ENCODE measurements at regions of chr7 and their contacts with region 1.

Region 1: GRCh38 chr7:139043823-139044812 is 8.3 kb upstream of the ZC3HAV1L start:
- DNase-seq: no peak
- ATAC-seq: no peak
- H3K4me3 ChIP-seq: no peak overlapping the region
- H3K27ac ChIP-seq: peak overlapping the region in 4 of 10 donors; percentile 3 to 63 (median 28)
- H3K4me1 ChIP-seq: peaks cover 0 to 34% (median 8%) of the 10 kb centered on the region in 9 donors
- H3K27me3 ChIP-seq: no peaks in the 10 kb centered on the region
- CTCF ChIP-seq: no peak

Region 2: GRCh38 chr7:138429577-138430250 is 614.4 kb before region 1 on chr7:
- intact Hi-C with region 1: loop called in 1 of 10 experiments (anchors 10 kb)
- DNase-seq: no peak
- ATAC-seq: no peak
- H3K4me3 ChIP-seq: no peak overlapping the region
- H3K27ac ChIP-seq: no peak overlapping the region
- H3K4me1 ChIP-seq: no peaks in the 10 kb centered on the region
- H3K27me3 ChIP-seq: no peaks in the 10 kb centered on the region
- CTCF ChIP-seq: no peak

Measured in heart right ventricle (tissue), 16 donors.